Cardiac septum (tissue), 1 donor: ENCODE measurements at regions of chr2 and their contacts with region 1.

Region 1: GRCh38 chr2:164737612-164738081 is 104.0 kb downstream of the COBLL1 start:
- DNase-seq: no peak

Region 2: DNA sequence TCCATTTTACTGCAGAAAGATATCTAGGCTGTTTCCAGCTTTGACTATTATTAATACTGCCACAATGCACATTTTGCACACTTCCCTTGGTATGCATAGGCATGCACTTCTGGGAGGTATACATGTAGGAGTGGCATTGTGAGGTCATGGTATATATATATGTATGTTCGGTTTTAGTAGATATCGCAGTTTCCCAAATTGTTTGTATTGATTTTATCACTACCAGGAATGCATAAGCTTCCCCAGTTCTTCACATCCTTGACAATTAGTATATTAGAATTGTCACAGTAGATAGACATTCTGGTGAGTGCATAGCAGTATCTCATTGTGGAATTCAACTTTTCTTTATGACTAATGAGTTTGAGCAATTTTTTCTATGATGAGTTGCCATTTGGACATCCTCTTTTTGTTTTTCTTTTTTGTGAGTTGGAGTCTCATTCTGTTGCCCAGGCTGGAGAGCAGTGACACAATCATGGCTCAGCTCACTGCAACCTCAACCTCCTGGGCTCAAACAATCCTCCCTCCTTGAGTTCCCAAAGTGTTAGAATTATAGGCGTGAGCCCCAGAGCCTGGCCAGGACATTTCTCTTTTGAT is 112.2 kb before region 1 on chr2:
- intact Hi-C with region 1: no loop called
- DNase-seq: no peak

Region 3: DNA sequence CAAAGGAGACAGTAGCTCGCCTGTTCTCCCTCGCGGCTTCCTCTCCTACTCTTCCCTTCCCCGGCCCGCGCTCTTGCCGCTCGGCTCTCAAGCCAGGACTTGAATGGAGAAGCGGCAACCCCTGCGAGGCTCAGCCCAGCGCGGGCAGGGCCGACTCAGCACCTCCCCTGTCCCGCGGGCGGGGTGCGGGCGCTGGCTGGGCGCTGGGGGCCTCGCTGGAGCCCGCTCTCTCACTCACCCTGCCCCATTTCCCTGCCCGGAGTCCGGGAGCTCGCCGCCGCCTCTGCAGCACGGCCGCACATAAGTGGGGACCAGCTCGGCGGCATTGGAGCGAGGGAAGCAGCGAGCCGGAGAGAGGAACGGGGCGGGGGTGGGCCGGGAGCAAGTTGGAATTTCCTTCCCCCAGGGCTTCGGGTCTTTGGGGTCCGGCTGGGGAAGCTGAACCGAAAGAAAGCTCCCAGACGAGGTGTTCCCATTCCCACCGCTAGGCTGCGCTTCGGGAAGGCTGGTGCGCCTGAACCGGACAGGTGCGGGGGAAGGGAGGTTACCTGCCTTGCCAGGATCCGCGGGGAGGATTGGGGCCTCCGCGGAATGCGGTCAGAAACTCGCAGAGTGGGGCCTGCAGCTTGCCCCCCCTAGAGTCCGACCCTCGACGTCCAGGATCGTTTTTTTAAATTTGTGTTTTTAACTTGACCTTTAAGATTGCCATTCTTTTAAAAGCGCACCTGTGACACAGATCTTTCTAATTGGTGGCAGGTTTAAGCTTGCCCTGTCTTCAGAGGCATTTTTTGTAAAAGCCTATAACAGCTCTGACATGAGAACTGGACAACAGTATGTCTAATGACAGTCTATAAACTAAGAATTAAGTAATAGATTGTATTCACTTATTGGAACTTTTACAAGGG is 104.3 kb after region 1 on chr2 and contains the start of gene COBLL1:
- intact Hi-C with region 1: loop called (anchors 2 kb)
- DNase-seq: peak; percentile 89
- total RNA-seq, gene COBLL1: 15.0 TPM

Region 4: DNA sequence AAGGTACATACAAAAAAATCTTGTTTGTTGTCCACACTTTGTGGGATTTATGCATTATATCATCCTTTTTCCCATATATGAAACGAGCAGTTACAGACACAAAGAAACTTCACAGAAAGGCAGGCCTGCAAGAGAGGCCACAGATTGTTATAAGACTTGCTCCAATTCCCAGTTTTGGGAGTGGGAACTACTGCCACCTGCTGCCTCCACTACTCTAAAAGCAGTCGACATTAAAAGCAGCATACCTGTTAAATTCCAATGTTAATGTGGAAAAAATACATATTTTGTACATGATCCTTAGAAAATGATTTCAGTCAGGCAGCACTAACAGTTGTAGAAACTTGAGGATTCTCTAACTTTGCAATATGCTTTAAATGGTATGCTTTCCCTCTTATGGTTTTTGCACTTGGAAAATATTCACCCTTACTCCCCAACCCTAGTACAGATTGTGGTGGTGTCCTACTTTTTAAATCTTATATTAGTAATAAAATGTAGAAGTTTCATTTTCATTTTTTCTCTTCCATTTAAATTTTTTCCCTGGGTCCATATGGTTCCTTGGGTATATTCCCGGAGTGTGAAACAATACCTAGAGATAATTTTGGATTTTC is 179.8 kb after region 1 on chr2:
- intact Hi-C with region 1: loop called (anchors 2 kb)
- DNase-seq: no peak

Region 5: GRCh38 chr2:164981217-164981990 is 243.8 kb after region 1 on chr2:
- intact Hi-C with region 1: no loop called
- DNase-seq: no peak

Region 6: GRCh38 chr2:164992818-164993217 is 255.2 kb after region 1 on chr2:
- intact Hi-C with region 1: loop called (anchors 5 kb)
- DNase-seq: no peak

Region 7: GRCh38 chr2:165173215-165173614 is 435.6 kb after region 1 on chr2:
- intact Hi-C with region 1: no loop called
- DNase-seq: no peak